Activated T-helper 1 cell treated with anti-CD3 and anti-CD28 coated beads, Interleukin-12 subunit alpha, Interleukin-12 subunit beta, Interleukin-2, Interleukin-4 antibody, amounts not matched to agents 30 ng/mL and 10 ng/mL and 1 ng/mL, durations not matched to agents 14 hours and 24 hours and 36 hours (primary cell): ENCODE measurements at regions of chr14 and their contacts with region 1.

Region 1: GRCh38 chr14:61837336-61838229 is 75.4 kb downstream of the SNAPC1 start:
- DNase-seq: peak; percentile 66
- H3K4me3 Mint-ChIP-seq: no peak overlapping the region
- H3K27ac Mint-ChIP-seq: no peak overlapping the region
- H3K4me1 Mint-ChIP-seq: no peaks in the 10 kb centered on the region
- H3K27me3 Mint-ChIP-seq: peaks cover 9% of the 10 kb centered on the region

Region 2: GRCh38 chr14:61269321-61270083 is 568.1 kb before region 1 on chr14:
- intact Hi-C with region 1: loop called (anchors 1 kb)
- DNase-seq: peak; percentile 62
- H3K4me3 Mint-ChIP-seq: peak overlapping the region; percentile 48
- H3K27ac Mint-ChIP-seq: no peak overlapping the region
- H3K4me1 Mint-ChIP-seq: no peaks in the 10 kb centered on the region
- H3K27me3 Mint-ChIP-seq: peaks cover 61% of the 10 kb centered on the region

Region 3: DNA sequence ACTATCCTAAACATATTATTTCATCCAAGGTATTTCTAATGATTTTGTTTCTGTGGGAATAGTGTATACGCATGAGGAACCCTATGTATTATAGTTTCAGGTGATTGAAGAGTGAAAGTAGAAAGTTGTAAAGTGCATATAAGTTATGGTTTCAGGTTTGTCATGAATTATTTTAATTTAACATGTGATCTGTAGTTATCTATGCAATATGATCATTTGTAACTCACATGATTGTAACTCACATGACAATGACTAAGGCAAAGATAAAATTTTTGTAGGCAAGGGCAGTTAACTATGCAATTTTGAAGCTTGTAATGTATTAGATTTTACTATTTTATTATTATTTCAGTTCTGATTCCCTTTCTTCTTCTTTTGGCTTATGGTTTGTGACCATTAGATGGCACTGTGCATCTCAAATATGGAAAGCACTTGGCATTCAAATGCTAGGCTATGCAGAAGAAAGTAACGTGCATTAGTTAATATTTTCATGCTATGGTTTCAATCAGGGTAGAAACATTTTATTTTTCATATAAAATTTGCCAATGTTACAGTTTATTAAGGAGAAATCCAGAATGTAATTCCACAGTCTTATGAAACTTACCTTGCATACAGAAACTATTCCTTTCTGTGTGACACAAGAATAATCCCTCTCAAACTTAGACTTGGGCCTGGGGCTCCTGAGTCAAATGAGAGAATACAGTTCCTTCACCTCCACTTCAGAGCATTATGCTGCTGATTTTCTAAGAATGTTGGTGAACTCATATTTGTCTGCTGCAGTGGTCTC is 540.7 kb before region 1 on chr14:
- intact Hi-C with region 1: loop called (anchors 1 kb)
- DNase-seq: no peak
- H3K4me3 Mint-ChIP-seq: no peak overlapping the region
- H3K27ac Mint-ChIP-seq: no peak overlapping the region
- H3K4me1 Mint-ChIP-seq: peaks cover 35% of the 10 kb centered on the region
- H3K27me3 Mint-ChIP-seq: no peaks in the 10 kb centered on the region

Region 4: DNA sequence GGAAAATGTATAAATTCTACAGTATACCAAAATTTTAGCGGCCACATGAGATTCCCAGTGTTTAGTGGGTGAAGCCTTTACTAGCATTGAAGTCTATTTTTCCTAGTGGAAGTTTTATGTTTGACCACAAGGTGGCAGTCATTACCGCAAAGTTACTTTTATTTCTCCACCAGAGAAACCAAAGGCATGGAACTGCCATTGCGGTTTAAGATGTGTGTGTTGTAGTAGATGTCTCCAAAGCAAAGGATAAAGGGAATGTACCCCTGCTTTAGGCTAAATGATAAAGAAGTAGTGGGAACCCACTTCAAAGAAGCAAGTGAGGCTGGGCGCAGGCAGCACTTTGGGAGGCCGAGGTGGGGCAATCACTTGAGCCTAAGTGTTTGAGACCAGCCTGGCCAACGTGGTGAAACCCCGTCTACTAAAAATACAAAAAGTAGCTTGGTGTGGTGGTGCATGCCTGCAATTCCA is 375.7 kb before region 1 on chr14:
- intact Hi-C with region 1: loop called (anchors 1 kb)
- DNase-seq: no peak
- H3K4me3 Mint-ChIP-seq: peak overlapping the region; percentile 15
- H3K27ac Mint-ChIP-seq: peak overlapping the region; percentile 65
- H3K4me1 Mint-ChIP-seq: peaks cover 51% of the 10 kb centered on the region
- H3K27me3 Mint-ChIP-seq: no peaks in the 10 kb centered on the region

Region 5: DNA sequence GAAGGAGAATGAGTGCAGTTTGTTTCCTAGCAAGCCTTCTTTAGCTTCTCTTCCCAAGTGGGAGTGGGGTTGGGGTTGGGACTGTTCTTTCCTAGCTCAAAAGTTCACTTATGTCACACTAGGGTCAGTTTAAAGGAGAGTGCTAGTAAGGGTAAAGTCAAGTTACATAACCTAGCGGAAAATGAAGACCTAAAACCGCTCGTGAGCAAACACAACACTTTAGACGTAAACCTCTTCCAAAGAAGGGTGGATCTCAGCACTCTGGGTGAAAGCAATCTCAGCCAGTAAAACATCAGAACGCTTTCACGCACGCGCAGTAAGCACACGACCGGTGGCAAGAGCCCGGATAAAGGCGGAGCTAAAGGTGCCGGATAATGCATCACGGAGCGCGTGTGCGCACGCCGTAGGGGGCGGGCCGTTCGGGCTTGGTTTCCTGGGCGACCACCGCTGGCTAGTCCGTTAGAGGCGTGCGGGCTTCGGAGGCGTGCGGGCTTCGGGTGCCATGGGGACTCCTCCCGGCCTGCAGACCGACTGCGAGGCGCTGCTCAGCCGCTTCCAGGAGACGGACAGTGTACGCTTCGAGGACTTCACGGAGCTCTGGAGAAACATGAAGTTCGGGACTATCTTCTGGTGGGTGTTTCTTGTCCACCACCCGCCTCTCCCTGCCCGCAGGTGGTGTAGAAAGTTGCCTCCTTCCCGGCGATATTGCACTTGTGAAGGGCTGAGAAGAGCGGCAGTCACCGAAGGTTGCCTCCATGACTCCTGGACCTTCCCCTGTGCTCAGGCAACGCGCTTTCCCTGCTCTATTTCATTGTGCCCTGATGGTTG is 75.4 kb before region 1 on chr14 and contains the start of gene SNAPC1:
- intact Hi-C with region 1: loop called (anchors 1 kb)
- DNase-seq: peak; percentile 97
- H3K4me3 Mint-ChIP-seq: peak within 1 kb of the TSS; percentile 91
- H3K27ac Mint-ChIP-seq: peak within 1 kb of the TSS; percentile 90
- H3K4me1 Mint-ChIP-seq: peaks cover 59% of the 10 kb centered on the region
- H3K27me3 Mint-ChIP-seq: peaks cover 3% of the 10 kb centered on the region
- total RNA-seq, gene SNAPC1: 10.8 and 11.0 TPM in 2 replicates